ENCODE measurements at regions of chr4 and their contacts with region 1.

Region 1: GRCh38 chr4:77443941-77444340 is 161.7 kb upstream of the CXCL13 start:
- DNase-seq: no peak
- ATAC-seq: no peak
- H3K4me3 ChIP-seq: no peak overlapping the region
- H3K4me3 Mint-ChIP-seq: no peak overlapping the region
- H3K27ac ChIP-seq: no peak overlapping the region
- H3K27ac Mint-ChIP-seq: no peak overlapping the region
- H3K4me1 ChIP-seq: no peaks in the 10 kb centered on the region
- H3K4me1 Mint-ChIP-seq: no peaks in the 10 kb centered on the region
- H3K27me3 ChIP-seq: peaks cover 0 to 3% of the 10 kb centered on the region in 2 experiments
- H3K27me3 Mint-ChIP-seq: peaks cover 2 to 17% of the 10 kb centered on the region in 2 donors

Region 2: GRCh38 chr4:76722838-76723237 is 721.1 kb before region 1 on chr4:
- CTCF ChIA-PET with region 1: interaction called in 1 of 2 experiments, 3 read pairs
- POLR2A ChIA-PET with region 1: interaction called in 1 of 2 experiments, 12 read pairs
- DNase-seq: no peak
- ATAC-seq: no peak
- H3K4me3 ChIP-seq: no peak overlapping the region
- H3K4me3 Mint-ChIP-seq: no peak overlapping the region
- H3K27ac ChIP-seq: no peak overlapping the region
- H3K27ac Mint-ChIP-seq: no peak overlapping the region
- H3K4me1 ChIP-seq: peaks cover 0 to 3% of the 10 kb centered on the region in 2 experiments
- H3K4me1 Mint-ChIP-seq: no peaks in the 10 kb centered on the region
- H3K27me3 ChIP-seq: peaks cover 0 to 3% of the 10 kb centered on the region in 2 experiments
- H3K27me3 Mint-ChIP-seq: peaks cover 9 to 18% of the 10 kb centered on the region in 2 donors

Region 3: DNA sequence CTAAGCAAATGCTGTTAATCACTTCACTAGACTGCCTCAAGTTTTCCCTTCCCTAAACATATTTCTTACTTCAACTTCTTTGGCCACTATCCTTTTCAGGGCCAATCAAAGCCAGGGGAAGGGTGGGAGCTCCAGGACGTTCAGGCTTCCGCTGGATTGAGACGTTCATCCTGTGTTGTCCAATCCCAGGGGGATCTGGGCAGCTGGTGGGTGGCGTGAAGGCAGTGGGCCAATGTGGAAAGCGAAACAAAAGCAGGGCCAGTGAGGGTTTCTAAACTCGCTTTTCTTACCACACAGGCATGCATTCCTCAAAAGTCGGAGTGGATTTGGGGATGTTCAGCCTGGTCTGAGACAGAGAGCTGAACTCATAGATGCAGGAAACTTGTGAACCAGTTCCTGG is 169.3 kb after region 1 on chr4:
- CTCF ChIA-PET with region 1: no interaction called
- POLR2A ChIA-PET with region 1: no interaction called
- DNase-seq: no peak
- ATAC-seq: no peak
- H3K4me3 ChIP-seq: no peak overlapping the region
- H3K4me3 Mint-ChIP-seq: no peak overlapping the region
- H3K27ac ChIP-seq: no peak overlapping the region
- H3K27ac Mint-ChIP-seq: no peak overlapping the region
- H3K4me1 ChIP-seq: no peaks in the 10 kb centered on the region
- H3K4me1 Mint-ChIP-seq: peaks cover 0 to under 1% (median 0%) of the 10 kb centered on the region in 3 donors
- H3K27me3 ChIP-seq: peaks cover 0 to 7% of the 10 kb centered on the region in 2 experiments
- H3K27me3 Mint-ChIP-seq: peaks cover 14 to 15% of the 10 kb centered on the region in 2 donors